Activated CD8-positive, alpha-beta T cell treated with anti-CD3 and anti-CD28 coated beads for 36 hours (primary cell): ENCODE measurements at regions of chr6 and their contacts with region 1.

Region 1: GRCh38 chr6:25061289-25061936 is 125.7 kb upstream of the RIPOR2 start:
- DNase-seq: no peak
- ATAC-seq: no peak
- H3K4me3 Mint-ChIP-seq: no peak overlapping the region
- H3K27ac Mint-ChIP-seq: no peak overlapping the region
- H3K4me1 Mint-ChIP-seq: peaks cover 18% of the 10 kb centered on the region
- H3K27me3 Mint-ChIP-seq: no peaks in the 10 kb centered on the region
- CTCF ChIP-seq: no peak

Region 2: GRCh38 chr6:25035527-25036435 is 25.6 kb before region 1 on chr6:
- CTCF ChIA-PET with region 1: interaction called, 10 read pairs
- POLR2A ChIA-PET with region 1: interaction called, 6 read pairs
- intact Hi-C with region 1: no loop called
- DNase-seq: peak; percentile 34
- ATAC-seq: peak; percentile 45
- H3K4me3 Mint-ChIP-seq: peak overlapping the region; percentile 77
- H3K27ac Mint-ChIP-seq: peak overlapping the region; percentile 84
- H3K4me1 Mint-ChIP-seq: peaks cover 55% of the 10 kb centered on the region
- H3K27me3 Mint-ChIP-seq: no peaks in the 10 kb centered on the region
- CTCF ChIP-seq: no peak